Heart right ventricle (tissue), 16 donors: ENCODE measurements at regions of chr19 and their contacts with region 1.

Region 1: DNA sequence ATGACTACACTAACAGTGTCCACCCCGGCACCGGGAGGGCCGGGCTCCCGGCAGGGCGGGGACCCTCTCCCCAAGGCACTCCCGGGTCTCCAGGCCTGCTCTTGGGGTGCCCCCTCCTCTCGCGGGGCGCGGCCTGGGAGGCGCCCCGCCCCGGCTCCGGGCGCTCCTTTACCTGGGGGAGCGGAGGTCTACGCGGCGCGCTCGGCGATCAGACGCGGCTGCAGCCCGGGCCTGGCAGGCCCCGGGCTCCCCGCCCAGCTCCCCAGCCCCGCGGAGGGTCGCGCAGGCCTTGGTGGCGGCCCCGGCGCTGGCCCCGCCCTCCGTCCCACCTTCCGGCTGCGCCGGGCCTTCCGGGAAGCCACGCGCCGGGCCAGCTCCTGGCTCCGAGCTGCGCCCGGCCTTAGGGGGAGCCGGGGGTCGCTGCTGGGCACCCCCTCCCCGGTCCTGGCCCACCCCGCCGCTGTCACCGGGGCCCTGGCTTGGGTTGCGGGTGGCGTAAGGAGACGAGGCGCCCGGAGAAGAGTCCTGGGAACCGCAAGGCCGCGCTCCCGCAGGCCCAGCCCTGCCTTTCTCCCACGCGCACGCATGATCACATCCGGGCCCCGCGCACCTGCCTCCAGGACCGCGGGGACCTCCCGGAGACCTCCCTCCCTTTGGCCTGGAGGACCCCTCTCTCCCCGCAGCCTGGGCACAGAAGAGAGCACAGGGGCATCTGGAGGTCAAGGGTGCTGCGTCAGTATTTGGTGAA is at the start of gene C19orf12:
- DNase-seq: peak; percentile 53 to 73
- ATAC-seq: peak; percentile 76 to 92 (median 84)
- H3K4me3 ChIP-seq: peak within 1 kb of the TSS; percentile 82 to 99 (median 94)
- H3K27ac ChIP-seq: peak within 1 kb of the TSS; percentile 92 to 100 (median 98)
- H3K4me1 ChIP-seq: peaks cover 0 to 49% (median 23%) of the 10 kb centered on the region in 9 donors
- H3K27me3 ChIP-seq: no peaks in the 10 kb centered on the region
- CTCF ChIP-seq: peak in 1 of 9 donors; percentile 4
- total RNA-seq, gene C19orf12: 30.3 to 83.3 (median 40.0) TPM

Region 2: DNA sequence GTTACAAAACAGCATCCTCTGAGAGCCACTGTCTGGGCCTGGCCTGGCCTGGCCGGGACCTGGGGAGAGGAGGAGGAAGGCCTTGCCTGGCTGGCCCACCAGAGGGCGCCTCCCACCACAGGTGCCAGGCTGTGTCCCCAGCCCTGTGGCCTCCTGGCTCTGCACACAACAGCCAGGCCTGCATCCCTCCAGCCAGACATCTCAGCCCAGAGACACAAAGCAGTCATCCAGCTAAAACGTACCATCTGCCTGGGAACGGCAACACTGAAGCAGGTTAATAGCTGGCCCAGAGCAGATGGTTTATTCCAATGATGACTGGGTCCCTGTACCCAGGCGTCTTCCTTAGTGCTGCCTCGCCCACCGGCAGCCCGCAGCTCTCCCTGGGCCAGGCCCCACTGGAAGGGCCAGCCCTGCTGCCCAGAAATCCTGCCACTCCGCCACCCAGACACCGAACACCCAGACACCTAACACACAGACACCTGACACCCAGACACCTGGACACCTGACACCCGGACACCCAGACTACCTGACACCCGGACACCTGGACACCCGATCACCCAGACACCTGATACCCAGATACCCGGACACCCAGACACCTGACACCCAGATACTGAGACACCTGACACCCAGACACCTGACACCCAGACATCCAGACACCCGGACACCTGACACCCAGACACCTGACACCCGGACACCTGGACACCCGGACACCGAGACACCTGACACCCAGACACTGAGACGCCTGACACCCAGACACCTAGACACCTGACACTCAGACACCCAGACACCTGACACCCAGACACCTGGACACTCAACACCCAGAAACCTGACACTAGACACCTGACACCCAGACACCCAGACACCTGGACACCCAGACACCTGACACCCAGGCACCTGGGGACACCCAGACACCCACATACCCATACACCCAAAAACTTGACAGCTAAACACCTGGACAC is 20.2 kb before region 1 on chr19:
- intact Hi-C with region 1: loop called in 5 of 10 experiments (anchors 1 to 2 kb)
- DNase-seq: peak; percentile 73 to 85
- ATAC-seq: peak; percentile 93 to 98 (median 97)
- H3K4me3 ChIP-seq: no peak overlapping the region
- H3K27ac ChIP-seq: peak overlapping the region in 1 of 10 donors; percentile 17
- H3K4me1 ChIP-seq: peaks cover 0 to 8% (median 4%) of the 10 kb centered on the region in 9 donors
- H3K27me3 ChIP-seq: no peaks in the 10 kb centered on the region
- CTCF ChIP-seq: peak; percentile 76 to 96 (median 91)

Region 3: GRCh38 chr19:29844891-29845572 is 129.9 kb after region 1 on chr19:
- intact Hi-C with region 1: no loop called
- DNase-seq: peak; percentile 91 to 95
- ATAC-seq: peak; percentile 92 to 97 (median 94)
- H3K4me3 ChIP-seq: peak overlapping the region; percentile 49 to 94 (median 70)
- H3K27ac ChIP-seq: peak overlapping the region; percentile 2 to 86 (median 70)
- H3K4me1 ChIP-seq: peaks cover 2 to 27% (median 24%) of the 10 kb centered on the region in 9 donors
- H3K27me3 ChIP-seq: peaks cover 0 to 6% (median 0%) of the 10 kb centered on the region in 7 donors
- CTCF ChIP-seq: peak in 1 of 9 donors; percentile 9